SK-N-SH (cell line): ENCODE measurements at regions of chr2 and their contacts with region 1.

Region 1: DNA sequence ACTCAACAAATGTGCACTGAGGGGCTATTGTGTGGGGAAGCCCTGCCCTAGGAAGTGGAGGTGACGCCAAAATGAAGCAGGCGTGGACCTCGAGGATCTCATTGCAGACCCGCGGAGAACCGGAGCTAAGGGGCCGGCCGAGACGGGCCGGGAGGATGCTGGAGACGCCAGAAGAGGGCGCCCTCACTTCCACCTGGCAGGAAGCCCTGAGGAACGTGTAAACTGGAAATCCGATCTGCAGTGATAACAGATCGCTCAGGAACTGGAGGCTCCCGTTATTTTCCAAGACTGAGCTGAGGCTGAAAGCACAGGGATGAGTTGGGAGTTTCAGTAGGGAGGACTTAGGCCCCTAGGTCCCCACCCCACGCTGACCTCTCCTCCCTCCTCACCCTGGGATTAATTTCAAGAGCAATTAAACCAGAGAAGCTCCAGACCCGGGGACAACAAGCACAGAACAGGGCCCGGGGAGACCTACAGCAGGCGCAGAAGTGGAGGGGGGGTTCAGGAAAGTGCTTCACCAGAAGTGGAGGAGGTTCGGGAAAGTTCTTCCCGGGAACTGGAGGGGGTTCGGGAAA is 7.7 kb upstream of the COL6A3 start:
- DNase-seq: peak; percentile 71
- H3K4me3 ChIP-seq: no peak overlapping the region; a peak in 1 of 4 replicates
- H3K27ac ChIP-seq: peak overlapping the region; percentile 62 to 82
- H3K4me1 ChIP-seq: peaks cover 16 to 18% of the 10 kb centered on the region in 2 experiments; a peak in 2 of 4 replicates
- H3K27me3 ChIP-seq: no peaks in the 10 kb centered on the region
- CTCF ChIP-seq: peak; percentile 88
- EP300 ChIP-seq: peak in 1 of 2 experiments; percentile 56; a peak in 1 of 4 replicates
- RAD21 ChIP-seq: peak; percentile 67

Region 2: GRCh38 chr2:237154082-237154638 is 267.5 kb before region 1 on chr2:
- CTCF ChIA-PET with region 1: interaction called, 12 read pairs
- POLR2A ChIA-PET with region 1: no interaction called
- DNase-seq: peak; percentile 70
- H3K4me3 ChIP-seq: no peak overlapping the region
- H3K27ac ChIP-seq: no peak overlapping the region
- H3K4me1 ChIP-seq: peaks cover 19 to 22% of the 10 kb centered on the region in 2 experiments; a peak in 3 of 4 replicates
- H3K27me3 ChIP-seq: no peaks in the 10 kb centered on the region
- CTCF ChIP-seq: peak; percentile 66
- EP300 ChIP-seq: no peak
- RAD21 ChIP-seq: peak; percentile 97

Region 3: GRCh38 chr2:237434866-237435311 is 13.3 kb after region 1 on chr2:
- CTCF ChIA-PET with region 1: interaction called, 27 read pairs
- POLR2A ChIA-PET with region 1: no interaction called
- DNase-seq: no peak
- H3K4me3 ChIP-seq: no peak overlapping the region
- H3K27ac ChIP-seq: peak overlapping the region; percentile 12 to 99; a peak in 3 of 4 replicates
- H3K4me1 ChIP-seq: peaks cover 34 to 45% of the 10 kb centered on the region in 2 experiments
- H3K27me3 ChIP-seq: no peaks in the 10 kb centered on the region
- CTCF ChIP-seq: no peak
- EP300 ChIP-seq: no peak
- RAD21 ChIP-seq: no peak

Region 4: GRCh38 chr2:237441605-237442274 is 20.1 kb after region 1 on chr2:
- CTCF ChIA-PET with region 1: interaction called, 27 read pairs
- POLR2A ChIA-PET with region 1: interaction called, 3 read pairs
- DNase-seq: peak; percentile 80
- H3K4me3 ChIP-seq: no peak overlapping the region
- H3K27ac ChIP-seq: peak overlapping the region; percentile 85 to 93
- H3K4me1 ChIP-seq: peaks cover 17 to 34% of the 10 kb centered on the region in 2 experiments
- H3K27me3 ChIP-seq: no peaks in the 10 kb centered on the region
- CTCF ChIP-seq: no peak
- EP300 ChIP-seq: peak; percentile 32 to 63; a peak in 3 of 4 replicates
- RAD21 ChIP-seq: peak; percentile 1; the same call in 1 of the 2 replicates

Region 5: GRCh38 chr2:237451643-237452469 is 30.2 kb after region 1 on chr2:
- CTCF ChIA-PET with region 1: interaction called, 59 read pairs
- POLR2A ChIA-PET with region 1: no interaction called
- DNase-seq: peak; percentile 87
- H3K4me3 ChIP-seq: no peak overlapping the region
- H3K27ac ChIP-seq: peak overlapping the region in 1 of 2 experiments; percentile 83; a peak in 2 of 4 replicates
- H3K4me1 ChIP-seq: peaks cover 0 to 24% of the 10 kb centered on the region in 2 experiments; a peak in 1 of 4 replicates
- H3K27me3 ChIP-seq: no peaks in the 10 kb centered on the region
- CTCF ChIP-seq: peak; percentile 28
- EP300 ChIP-seq: peak in 1 of 2 experiments; percentile 68; a peak in 2 of 4 replicates
- RAD21 ChIP-seq: peak; percentile 47

Region 6: GRCh38 chr2:237474931-237475703 is 53.5 kb after region 1 on chr2:
- CTCF ChIA-PET with region 1: interaction called, 49 read pairs
- POLR2A ChIA-PET with region 1: interaction called, 5 read pairs
- DNase-seq: peak; percentile 99
- H3K4me3 ChIP-seq: peak overlapping the region; percentile 67 to 68
- H3K27ac ChIP-seq: peak overlapping the region; percentile 91 to 97
- H3K4me1 ChIP-seq: peaks cover 8 to 18% of the 10 kb centered on the region in 2 experiments; a peak in 3 of 4 replicates
- H3K27me3 ChIP-seq: no peaks in the 10 kb centered on the region
- CTCF ChIP-seq: peak; percentile 85
- EP300 ChIP-seq: peak in 1 of 2 experiments; percentile 41; a peak in 1 of 4 replicates
- RAD21 ChIP-seq: peak; percentile 68

Region 7: GRCh38 chr2:237483040-237483721 is 61.6 kb after region 1 on chr2:
- CTCF ChIA-PET with region 1: interaction called, 49 read pairs
- POLR2A ChIA-PET with region 1: no interaction called
- DNase-seq: no peak
- H3K4me3 ChIP-seq: no peak overlapping the region
- H3K27ac ChIP-seq: peak overlapping the region; percentile 56 to 87
- H3K4me1 ChIP-seq: peaks cover 14 to 29% of the 10 kb centered on the region in 2 experiments; a peak in 3 of 4 replicates
- H3K27me3 ChIP-seq: no peaks in the 10 kb centered on the region
- CTCF ChIP-seq: peak; percentile 54
- EP300 ChIP-seq: no peak
- RAD21 ChIP-seq: no peak

Region 8: DNA sequence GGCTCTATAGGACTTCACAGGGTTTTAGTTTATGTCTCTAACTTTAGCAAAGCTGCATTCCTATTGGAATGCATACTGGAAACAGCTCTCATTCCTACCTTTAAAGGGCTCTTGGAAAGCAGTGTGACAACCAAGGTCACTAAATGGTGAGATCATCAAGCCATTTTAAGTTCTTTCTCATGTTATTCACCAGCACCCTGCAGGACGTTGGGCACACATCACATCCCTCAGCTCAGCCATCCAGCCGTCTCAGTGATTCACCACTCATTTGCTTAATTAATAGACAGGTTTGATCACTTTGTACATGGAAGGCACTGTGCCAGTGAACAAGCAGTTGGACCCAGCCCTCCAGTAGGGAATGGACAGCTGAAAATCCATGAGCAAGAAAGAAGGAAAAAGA is 344.7 kb after region 1 on chr2:
- CTCF ChIA-PET with region 1: no interaction called
- POLR2A ChIA-PET with region 1: no interaction called
- DNase-seq: no peak
- H3K4me3 ChIP-seq: no peak overlapping the region
- H3K27ac ChIP-seq: no peak overlapping the region
- H3K4me1 ChIP-seq: no peaks in the 10 kb centered on the region; a peak in 1 of 4 replicates
- H3K27me3 ChIP-seq: no peaks in the 10 kb centered on the region
- CTCF ChIP-seq: no peak
- EP300 ChIP-seq: no peak
- RAD21 ChIP-seq: no peak

Region 9: GRCh38 chr2:237874585-237875161 is 453.0 kb after region 1 on chr2:
- CTCF ChIA-PET with region 1: no interaction called
- POLR2A ChIA-PET with region 1: no interaction called
- DNase-seq: no peak
- H3K4me3 ChIP-seq: no peak overlapping the region
- H3K27ac ChIP-seq: peak overlapping the region; percentile 50 to 64; a peak in 3 of 4 replicates
- H3K4me1 ChIP-seq: peaks cover 13 to 93% of the 10 kb centered on the region in 2 experiments; a peak in 3 of 4 replicates
- H3K27me3 ChIP-seq: no peaks in the 10 kb centered on the region
- CTCF ChIP-seq: no peak
- EP300 ChIP-seq: peak in 1 of 2 experiments; percentile 39; a peak in 1 of 4 replicates
- RAD21 ChIP-seq: no peak